Heart right ventricle (tissue), 16 donors: ENCODE measurements at regions of chr5 and their contacts with region 1.

Region 1: DNA sequence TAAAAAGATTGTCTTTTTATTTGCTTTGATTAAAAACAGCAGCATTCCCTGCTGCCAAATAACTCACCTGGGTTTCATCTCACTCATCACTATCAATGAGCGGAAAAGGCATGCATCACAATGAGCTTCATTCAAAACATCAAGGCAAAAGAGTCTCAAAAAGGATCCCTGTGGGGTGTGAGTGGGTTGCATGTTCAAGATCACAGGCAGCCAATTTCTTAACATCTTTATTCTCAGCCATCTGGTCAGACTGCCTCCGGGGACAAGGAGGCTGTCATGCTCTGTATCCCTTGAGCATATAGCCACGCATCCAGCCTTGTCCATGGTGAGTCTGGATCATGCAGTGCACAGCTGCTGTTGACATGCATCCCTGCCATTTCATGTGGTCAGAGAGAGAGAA is 117.1 kb downstream of the ICE1 start:
- DNase-seq: no peak
- ATAC-seq: no peak
- H3K4me3 ChIP-seq: no peak overlapping the region
- H3K27ac ChIP-seq: no peak overlapping the region
- H3K4me1 ChIP-seq: peaks cover 0 to 4% (median 0%) of the 10 kb centered on the region in 9 donors
- H3K27me3 ChIP-seq: peaks cover 0 to 2% (median 0%) of the 10 kb centered on the region in 7 donors
- CTCF ChIP-seq: no peak

Region 2: DNA sequence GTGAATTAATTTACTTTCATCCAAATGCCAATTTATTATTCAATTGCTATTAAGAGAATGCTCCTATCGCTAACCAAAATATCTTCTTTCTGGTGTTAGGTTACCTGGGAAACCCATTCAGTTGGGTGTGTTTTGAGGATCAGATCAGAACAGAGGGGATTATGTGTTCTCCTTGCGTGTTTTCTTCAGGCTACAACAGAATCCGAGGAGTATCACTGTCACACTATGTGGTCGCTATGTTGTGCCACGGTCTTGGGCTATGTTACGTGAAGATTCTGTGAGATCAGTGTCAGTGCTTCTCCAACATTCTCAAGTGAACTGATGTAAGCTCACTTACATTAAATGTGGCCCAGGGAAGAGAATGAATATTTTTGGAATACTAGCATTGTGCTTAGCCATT is 1895.3 kb after region 1 on chr5:
- intact Hi-C with region 1: loop called in 1 of 10 experiments (anchors 5 kb)
- DNase-seq: no peak
- ATAC-seq: no peak
- H3K4me3 ChIP-seq: no peak overlapping the region
- H3K27ac ChIP-seq: no peak overlapping the region
- H3K4me1 ChIP-seq: no peaks in the 10 kb centered on the region
- H3K27me3 ChIP-seq: no peaks in the 10 kb centered on the region
- CTCF ChIP-seq: no peak